Mammary epithelial cell (primary cell): ENCODE measurements at regions of chr6 and their contacts with region 1.

Region 1: GRCh38 chr6:105077596-105078385 is 102.0 kb downstream of the POPDC3 start:
- DNase-seq: peak; percentile 32
- H3K4me3 ChIP-seq: no peak overlapping the region
- H3K27ac ChIP-seq: no peak overlapping the region
- H3K4me1 ChIP-seq: peaks cover 7% of the 10 kb centered on the region
- H3K27me3 ChIP-seq: no peaks in the 10 kb centered on the region
- CTCF ChIP-seq: peak; percentile 53

Region 2: DNA sequence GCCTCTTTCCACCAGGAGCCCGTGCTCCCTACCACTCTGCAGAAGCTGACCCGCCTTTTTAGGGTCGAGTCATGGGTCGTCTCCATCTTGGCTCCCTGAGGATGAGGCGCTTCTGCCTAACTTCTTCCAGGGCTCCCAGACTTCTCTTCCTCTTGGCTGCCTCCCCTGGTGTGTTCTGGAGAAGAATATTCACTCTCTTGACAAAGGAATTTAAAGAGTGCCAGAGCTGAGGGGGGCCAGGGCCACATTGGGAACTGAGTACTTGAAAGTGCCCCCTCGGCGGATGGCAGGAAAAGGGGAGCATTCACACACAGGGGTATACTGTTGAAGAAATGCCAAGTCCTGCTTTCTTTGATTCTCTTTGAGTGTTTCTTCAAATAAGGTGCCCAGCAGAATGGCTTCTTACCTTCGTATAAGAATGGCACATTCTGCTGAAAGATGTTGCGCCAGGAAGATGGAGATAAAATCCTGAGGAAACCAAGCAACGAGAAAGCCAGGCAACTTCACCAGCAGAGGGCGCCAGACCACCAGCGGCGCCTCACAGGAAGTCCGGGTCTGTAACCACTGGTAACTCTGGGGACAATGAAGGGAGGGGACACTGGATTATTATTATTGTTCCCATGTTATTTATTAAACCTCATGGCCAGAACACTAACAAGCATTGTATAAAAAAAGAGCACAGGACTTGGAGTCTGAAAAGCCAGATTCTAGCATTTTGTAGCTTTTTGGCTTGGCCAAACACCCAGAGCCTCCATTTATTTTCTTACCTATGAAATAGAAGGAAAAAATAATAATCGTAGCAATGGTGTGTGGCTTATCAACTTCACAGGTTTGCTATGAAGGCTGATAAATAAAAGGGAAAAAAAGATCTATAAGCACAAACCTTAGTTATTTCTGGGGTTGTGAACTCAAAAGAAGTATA is 394.8 kb before region 1 on chr6:
- CTCF ChIA-PET with region 1: no interaction called
- dilution Hi-C with region 1: no loop called
- in situ Hi-C with region 1: no loop called
- intact Hi-C with region 1: loop called (anchors 5 kb)
- DNase-seq: peak; percentile 14
- H3K4me3 ChIP-seq: no peak overlapping the region
- H3K27ac ChIP-seq: no peak overlapping the region
- H3K4me1 ChIP-seq: no peaks in the 10 kb centered on the region
- H3K27me3 ChIP-seq: no peaks in the 10 kb centered on the region
- CTCF ChIP-seq: peak; percentile 89 to 93

Region 3: DNA sequence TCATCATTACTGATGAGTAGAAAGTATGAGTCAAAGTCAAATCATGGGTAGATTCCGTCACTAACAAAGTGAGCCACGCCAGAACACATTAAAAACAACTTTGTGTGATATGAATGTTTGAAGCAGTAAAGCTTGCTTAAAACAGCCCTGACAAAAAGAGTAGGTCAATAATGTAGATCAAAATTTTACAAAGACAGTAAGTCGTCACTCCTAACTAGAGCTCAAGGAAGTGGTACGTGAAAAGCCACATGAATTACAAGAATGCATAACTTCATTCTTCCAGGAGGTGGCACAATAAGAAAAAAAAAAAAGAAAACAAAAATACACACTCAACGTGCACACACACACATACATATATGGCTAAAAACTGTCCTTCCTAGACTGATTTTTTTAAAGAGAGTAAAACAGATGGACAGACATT is 288.0 kb before region 1 on chr6:
- CTCF ChIA-PET with region 1: interaction called, 12 read pairs
- dilution Hi-C with region 1: no loop called
- in situ Hi-C with region 1: loop called in 1 of 2 experiments (anchors 25 kb)
- intact Hi-C with region 1: loop called (anchors 1 kb)
- DNase-seq: peak; percentile 46
- H3K4me3 ChIP-seq: no peak overlapping the region
- H3K27ac ChIP-seq: peak overlapping the region; percentile 27
- H3K4me1 ChIP-seq: no peaks in the 10 kb centered on the region
- H3K27me3 ChIP-seq: no peaks in the 10 kb centered on the region
- CTCF ChIP-seq: peak; percentile 35 to 45

Region 4: DNA sequence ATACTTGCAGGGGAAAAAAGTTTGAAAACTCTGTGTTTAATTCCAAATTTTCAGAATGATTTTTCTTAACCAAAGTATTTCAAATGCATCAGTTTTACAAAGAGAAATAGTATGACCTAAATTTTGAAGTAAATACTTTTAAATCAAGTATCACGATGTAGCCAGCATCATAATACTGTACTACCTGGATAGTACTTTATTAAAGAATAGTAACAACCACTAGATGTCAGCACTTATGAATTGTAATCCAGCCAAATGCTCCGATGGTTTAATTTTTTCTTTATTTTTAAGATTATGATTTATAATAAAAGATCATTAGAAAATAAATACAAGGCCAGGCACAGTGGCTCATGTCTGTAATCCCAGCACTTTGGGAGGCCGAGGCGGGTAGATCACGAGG is 180.9 kb before region 1 on chr6:
- CTCF ChIA-PET with region 1: no interaction called
- dilution Hi-C with region 1: no loop called
- in situ Hi-C with region 1: no loop called
- intact Hi-C with region 1: loop called (anchors 2 kb)
- DNase-seq: no peak
- H3K4me3 ChIP-seq: no peak overlapping the region
- H3K27ac ChIP-seq: no peak overlapping the region
- H3K4me1 ChIP-seq: no peaks in the 10 kb centered on the region
- H3K27me3 ChIP-seq: peaks cover 2% of the 10 kb centered on the region
- CTCF ChIP-seq: peak; percentile 41 to 48

Region 5: GRCh38 chr6:104940881-104941728 is 136.7 kb before region 1 on chr6:
- CTCF ChIA-PET with region 1: no interaction called
- dilution Hi-C with region 1: no loop called
- in situ Hi-C with region 1: no loop called
- intact Hi-C with region 1: loop called (anchors 2 kb)
- DNase-seq: peak; percentile 7
- H3K4me3 ChIP-seq: no peak overlapping the region
- H3K27ac ChIP-seq: no peak overlapping the region
- H3K4me1 ChIP-seq: peaks cover 3% of the 10 kb centered on the region
- H3K27me3 ChIP-seq: peaks cover 21% of the 10 kb centered on the region
- CTCF ChIP-seq: peak in 1 of 2 donors; percentile 24

Region 6: GRCh38 chr6:104995989-104996617 is 81.7 kb before region 1 on chr6:
- CTCF ChIA-PET with region 1: interaction called, 3 read pairs
- dilution Hi-C with region 1: no loop called
- in situ Hi-C with region 1: no loop called
- intact Hi-C with region 1: loop called (anchors 1 kb)
- DNase-seq: peak; percentile 5
- H3K4me3 ChIP-seq: no peak overlapping the region
- H3K27ac ChIP-seq: no peak overlapping the region
- H3K4me1 ChIP-seq: no peaks in the 10 kb centered on the region
- H3K27me3 ChIP-seq: no peaks in the 10 kb centered on the region
- CTCF ChIP-seq: peak in 1 of 2 donors; percentile 17